PC-9 (cell line): ENCODE measurements at regions of chr17 and their contacts with region 1.

Region 1: DNA sequence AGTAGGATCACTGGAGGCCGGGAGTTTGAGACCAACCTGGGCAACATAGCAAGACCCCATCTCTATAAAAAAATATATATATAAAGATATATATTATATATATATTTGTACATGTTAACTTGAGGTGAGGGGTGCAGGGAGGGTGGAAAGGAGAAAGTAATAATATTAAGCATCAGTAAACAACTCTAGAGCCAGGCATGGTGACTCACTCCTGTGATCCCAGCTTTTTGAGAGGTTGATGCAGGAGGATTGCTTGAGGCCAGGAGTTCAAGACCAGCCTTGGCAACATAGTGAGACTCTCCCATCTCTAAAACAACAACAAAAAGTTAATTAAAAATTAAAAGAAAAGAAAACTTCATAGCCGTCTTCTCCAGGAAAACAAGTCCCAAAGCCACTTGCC is 61.7 kb upstream of the SMURF2 start:
- DNase-seq: no peak
- H3K4me3 ChIP-seq: no peak overlapping the region
- H3K27ac ChIP-seq: no peak overlapping the region
- H3K4me1 ChIP-seq: no peaks in the 10 kb centered on the region
- H3K27me3 ChIP-seq: no peaks in the 10 kb centered on the region
- CTCF ChIP-seq: no peak

Region 2: DNA sequence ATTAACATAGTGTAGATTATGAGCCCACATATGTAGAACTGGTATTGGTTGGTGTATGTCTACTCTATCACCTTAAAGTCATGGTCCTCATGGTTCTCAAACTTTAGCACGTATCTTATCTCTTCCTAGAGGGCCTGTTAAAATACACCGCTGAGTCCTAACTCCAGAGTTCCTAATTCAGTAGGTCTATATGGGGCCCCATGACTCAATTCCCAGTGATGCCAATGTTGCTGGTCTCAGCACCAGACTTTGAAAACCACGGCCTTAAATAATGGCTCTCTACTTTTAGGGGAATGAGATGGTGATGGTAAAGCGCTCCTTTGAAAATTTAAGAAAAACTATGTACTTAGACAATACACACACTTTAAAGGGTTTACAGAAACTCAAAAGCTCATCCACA is 98.2 kb before region 1 on chr17:
- CTCF ChIA-PET with region 1: interaction called, 13 read pairs
- POLR2A ChIA-PET with region 1: no interaction called
- intact Hi-C with region 1: no loop called
- DNase-seq: no peak
- H3K4me3 ChIP-seq: no peak overlapping the region
- H3K27ac ChIP-seq: peak overlapping the region; percentile 29
- H3K4me1 ChIP-seq: peaks cover 47% of the 10 kb centered on the region
- H3K27me3 ChIP-seq: no peaks in the 10 kb centered on the region
- CTCF ChIP-seq: no peak